Stomach (tissue), 19 donors: ENCODE measurements at regions of chr14 and their contacts with region 1.

Region 1: GRCh38 chr14:67526676-67527459 is 6.2 kb upstream of the PLEKHH1 start:
- DNase-seq: peak; percentile 42 to 77
- H3K4me3 ChIP-seq: no peak overlapping the region
- H3K27ac ChIP-seq: no peak overlapping the region
- H3K4me1 ChIP-seq: peaks cover 0 to 6% (median 0%) of the 10 kb centered on the region in 4 donors
- H3K27me3 ChIP-seq: peaks cover 0 to 44% (median 0%) of the 10 kb centered on the region in 3 donors
- CTCF ChIP-seq: peak in 5 of 7 experiments; percentile 18 to 83 (median 66)
- EP300 ChIP-seq: no peak
- POLR2A ChIP-seq: no peak

Region 2: GRCh38 chr14:67285876-67286452 is 240.9 kb before region 1 on chr14:
- intact Hi-C with region 1: no loop called
- DNase-seq: peak in 1 of 2 donors; percentile 67
- H3K4me3 ChIP-seq: no peak overlapping the region
- H3K27ac ChIP-seq: no peak overlapping the region
- H3K4me1 ChIP-seq: peaks cover 0 to 20% (median 6%) of the 10 kb centered on the region in 4 donors
- H3K27me3 ChIP-seq: no peaks in the 10 kb centered on the region
- CTCF ChIP-seq: peak in 3 of 7 experiments; percentile 45 to 62 (median 53)
- EP300 ChIP-seq: no peak
- POLR2A ChIP-seq: no peak

Region 3: GRCh38 chr14:67343601-67344230 is 183.2 kb before region 1 on chr14:
- intact Hi-C with region 1: no loop called
- DNase-seq: no peak
- H3K4me3 ChIP-seq: no peak overlapping the region
- H3K27ac ChIP-seq: no peak overlapping the region
- H3K4me1 ChIP-seq: no peaks in the 10 kb centered on the region
- H3K27me3 ChIP-seq: no peaks in the 10 kb centered on the region
- CTCF ChIP-seq: no peak
- EP300 ChIP-seq: no peak
- POLR2A ChIP-seq: no peak

Region 4: GRCh38 chr14:67680121-67680602 is 153.3 kb after region 1 on chr14:
- intact Hi-C with region 1: no loop called
- DNase-seq: no peak
- H3K4me3 ChIP-seq: no peak overlapping the region
- H3K27ac ChIP-seq: no peak overlapping the region
- H3K4me1 ChIP-seq: peaks cover 0 to 11% (median 4%) of the 10 kb centered on the region in 4 donors
- H3K27me3 ChIP-seq: no peaks in the 10 kb centered on the region
- CTCF ChIP-seq: no peak
- EP300 ChIP-seq: no peak
- POLR2A ChIP-seq: no peak

Region 5: GRCh38 chr14:67704484-67705089 is 177.7 kb after region 1 on chr14:
- intact Hi-C with region 1: loop called (anchors 10 kb)
- DNase-seq: peak in 1 of 2 donors; percentile 87
- H3K4me3 ChIP-seq: no peak overlapping the region
- H3K27ac ChIP-seq: peak overlapping the region in 2 of 5 donors; percentile 14 to 65
- H3K4me1 ChIP-seq: peaks cover 0 to 11% (median 2%) of the 10 kb centered on the region in 4 donors
- H3K27me3 ChIP-seq: no peaks in the 10 kb centered on the region
- CTCF ChIP-seq: peak in 5 of 7 experiments; percentile 46 to 72 (median 64)
- EP300 ChIP-seq: no peak
- POLR2A ChIP-seq: no peak